Mucosa of descending colon (tissue), 3 donors: ENCODE measurements at regions of chr6 and their contacts with region 1.

Region 1: GRCh38 chr6:69835414-69836179 is 30.8 kb upstream of the COL19A1 start:
- DNase-seq: peak in 1 of 3 donors; percentile 61
- ATAC-seq: peak; percentile 67
- H3K4me3 ChIP-seq: no peak overlapping the region
- H3K4me1 ChIP-seq: no peaks in the 10 kb centered on the region
- CTCF ChIP-seq: peak; percentile 60

Region 2: GRCh38 chr6:70079241-70079640 is 243.6 kb after region 1 on chr6:
- intact Hi-C with region 1: no loop called
- DNase-seq: no peak
- ATAC-seq: no peak
- H3K4me3 ChIP-seq: no peak overlapping the region
- H3K4me1 ChIP-seq: no peaks in the 10 kb centered on the region
- CTCF ChIP-seq: no peak

Region 3: GRCh38 chr6:70107852-70108629 is 272.4 kb after region 1 on chr6:
- intact Hi-C with region 1: loop called in 1 of 2 experiments (anchors 5 kb)
- DNase-seq: peak in 1 of 3 donors; percentile 3
- ATAC-seq: no peak
- H3K4me3 ChIP-seq: no peak overlapping the region
- H3K4me1 ChIP-seq: no peaks in the 10 kb centered on the region
- CTCF ChIP-seq: no peak